Caco-2 (cell line): ENCODE measurements at regions of chr1 and their contacts with region 1.

Region 1: GRCh38 chr1:81549604-81550127 is 251.1 kb upstream of the ADGRL2 start:
- DNase-seq: peak in 1 of 2 experiments; percentile 9
- H3K4me3 ChIP-seq: no peak overlapping the region
- H3K4me3 Mint-ChIP-seq: no peak overlapping the region
- H3K27ac Mint-ChIP-seq: no peak overlapping the region
- H3K4me1 ChIP-seq: no peaks in the 10 kb centered on the region
- H3K4me1 Mint-ChIP-seq: no peaks in the 10 kb centered on the region
- H3K27me3 ChIP-seq: no peaks in the 10 kb centered on the region
- H3K27me3 Mint-ChIP-seq: peaks cover 2% of the 10 kb centered on the region
- CTCF ChIP-seq: peak; percentile 15 to 24

Region 2: GRCh38 chr1:81305997-81306452 is 243.6 kb before region 1 on chr1:
- CTCF ChIA-PET with region 1: no interaction called
- POLR2A ChIA-PET with region 1: no interaction called
- intact Hi-C with region 1: loop called (anchors 10 kb)
- DNase-seq: peak in 1 of 2 experiments; percentile 4
- H3K4me3 ChIP-seq: peak overlapping the region; percentile 28
- H3K4me3 Mint-ChIP-seq: no peak overlapping the region
- H3K27ac Mint-ChIP-seq: no peak overlapping the region
- H3K4me1 ChIP-seq: no peaks in the 10 kb centered on the region
- H3K4me1 Mint-ChIP-seq: no peaks in the 10 kb centered on the region
- H3K27me3 ChIP-seq: no peaks in the 10 kb centered on the region
- H3K27me3 Mint-ChIP-seq: no peaks in the 10 kb centered on the region
- CTCF ChIP-seq: peak in 1 of 2 experiments; percentile 23

Region 3: DNA sequence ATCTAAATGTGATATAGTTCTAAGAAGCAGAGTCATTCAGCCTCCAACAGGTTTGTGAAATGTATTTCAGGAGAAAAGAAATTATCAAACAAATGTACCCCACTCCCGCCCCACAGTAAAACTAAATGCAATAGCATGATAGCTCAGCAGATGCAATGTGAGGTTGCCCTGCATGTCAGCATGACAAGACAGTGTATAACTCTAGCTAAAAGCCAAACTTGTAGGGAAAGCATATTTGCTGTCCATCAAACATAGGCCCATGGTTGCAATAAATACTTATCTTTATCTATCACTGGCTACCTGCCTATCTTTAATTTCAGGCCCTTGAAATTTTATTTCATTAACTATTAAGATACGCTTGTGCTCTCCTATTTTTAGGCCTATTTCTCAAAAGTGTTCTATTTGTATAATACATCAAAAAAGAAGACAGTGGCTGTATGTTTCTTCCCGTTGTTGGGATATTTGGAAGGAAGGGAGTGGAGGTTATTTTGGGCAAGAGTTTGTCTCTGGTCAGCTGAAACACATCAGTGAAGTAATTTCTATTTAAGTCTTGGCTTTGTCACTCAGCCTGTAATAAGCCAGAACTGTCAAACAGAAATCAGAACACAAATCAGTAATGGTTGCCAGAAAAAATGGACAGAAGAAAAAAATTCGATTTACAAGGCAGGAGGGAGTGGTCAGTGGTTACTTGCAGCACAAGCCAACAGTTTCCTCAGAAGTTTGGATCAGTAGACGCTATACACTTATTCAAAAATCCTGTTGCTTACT is 56.4 kb before region 1 on chr1:
- CTCF ChIA-PET with region 1: no interaction called
- POLR2A ChIA-PET with region 1: no interaction called
- intact Hi-C with region 1: no loop called
- DNase-seq: no peak
- H3K4me3 ChIP-seq: no peak overlapping the region
- H3K4me3 Mint-ChIP-seq: no peak overlapping the region
- H3K27ac Mint-ChIP-seq: no peak overlapping the region
- H3K4me1 ChIP-seq: no peaks in the 10 kb centered on the region
- H3K4me1 Mint-ChIP-seq: no peaks in the 10 kb centered on the region
- H3K27me3 ChIP-seq: no peaks in the 10 kb centered on the region
- H3K27me3 Mint-ChIP-seq: no peaks in the 10 kb centered on the region
- CTCF ChIP-seq: no peak

Region 4: GRCh38 chr1:81738875-81739274 is 189.2 kb after region 1 on chr1:
- CTCF ChIA-PET with region 1: no interaction called
- POLR2A ChIA-PET with region 1: no interaction called
- intact Hi-C with region 1: no loop called
- DNase-seq: no peak
- H3K4me3 ChIP-seq: no peak overlapping the region
- H3K4me3 Mint-ChIP-seq: no peak overlapping the region
- H3K27ac Mint-ChIP-seq: no peak overlapping the region
- H3K4me1 ChIP-seq: no peaks in the 10 kb centered on the region
- H3K4me1 Mint-ChIP-seq: no peaks in the 10 kb centered on the region
- H3K27me3 ChIP-seq: no peaks in the 10 kb centered on the region
- H3K27me3 Mint-ChIP-seq: no peaks in the 10 kb centered on the region
- CTCF ChIP-seq: no peak

Region 5: DNA sequence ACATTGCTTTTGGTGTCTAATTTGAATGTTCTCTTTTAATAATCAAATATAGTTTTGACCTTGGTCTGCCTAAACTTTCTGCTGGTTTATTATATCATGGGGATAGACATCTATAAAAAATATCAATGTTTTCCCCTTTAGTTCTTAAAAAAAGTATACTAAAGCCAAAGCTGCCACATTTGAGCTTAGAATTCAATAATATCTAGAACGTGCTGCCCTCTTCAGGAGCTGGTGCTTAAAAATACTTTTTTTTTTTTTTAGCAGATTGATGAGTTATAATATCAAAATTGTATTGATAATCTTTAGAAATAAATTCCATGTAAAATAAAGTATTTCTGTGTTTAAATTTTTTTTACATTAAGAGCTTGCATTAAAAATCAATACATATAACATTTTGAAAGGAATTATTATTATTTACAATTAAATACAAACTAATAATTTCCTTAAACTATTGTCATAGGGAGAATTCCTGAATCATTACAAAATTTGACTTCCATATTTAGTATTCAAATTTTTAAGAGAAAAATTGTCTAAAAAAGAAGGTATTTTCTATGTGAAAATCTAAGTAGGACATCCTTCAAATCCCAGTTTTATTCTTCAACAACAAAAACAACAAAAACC is 210.9 kb after region 1 on chr1:
- CTCF ChIA-PET with region 1: interaction called, 10 read pairs
- POLR2A ChIA-PET with region 1: no interaction called
- intact Hi-C with region 1: loop called (anchors 1 kb)
- DNase-seq: no peak
- H3K4me3 ChIP-seq: no peak overlapping the region
- H3K4me3 Mint-ChIP-seq: no peak overlapping the region
- H3K27ac Mint-ChIP-seq: no peak overlapping the region
- H3K4me1 ChIP-seq: no peaks in the 10 kb centered on the region
- H3K4me1 Mint-ChIP-seq: no peaks in the 10 kb centered on the region
- H3K27me3 ChIP-seq: no peaks in the 10 kb centered on the region
- H3K27me3 Mint-ChIP-seq: no peaks in the 10 kb centered on the region
- CTCF ChIP-seq: peak in 1 of 2 experiments; percentile 4

Region 6: GRCh38 chr1:81808760-81809159 is 259.1 kb after region 1 on chr1:
- CTCF ChIA-PET with region 1: interaction called, 4 read pairs
- POLR2A ChIA-PET with region 1: no interaction called
- intact Hi-C with region 1: loop called (anchors 2 kb)
- DNase-seq: no peak
- H3K4me3 ChIP-seq: no peak overlapping the region
- H3K4me3 Mint-ChIP-seq: no peak overlapping the region
- H3K27ac Mint-ChIP-seq: no peak overlapping the region
- H3K4me1 ChIP-seq: no peaks in the 10 kb centered on the region
- H3K4me1 Mint-ChIP-seq: no peaks in the 10 kb centered on the region
- H3K27me3 ChIP-seq: no peaks in the 10 kb centered on the region
- H3K27me3 Mint-ChIP-seq: peaks cover 5% of the 10 kb centered on the region
- CTCF ChIP-seq: no peak